ENCODE measurements at regions of chr11 and their contacts with region 1.

Region 1: DNA sequence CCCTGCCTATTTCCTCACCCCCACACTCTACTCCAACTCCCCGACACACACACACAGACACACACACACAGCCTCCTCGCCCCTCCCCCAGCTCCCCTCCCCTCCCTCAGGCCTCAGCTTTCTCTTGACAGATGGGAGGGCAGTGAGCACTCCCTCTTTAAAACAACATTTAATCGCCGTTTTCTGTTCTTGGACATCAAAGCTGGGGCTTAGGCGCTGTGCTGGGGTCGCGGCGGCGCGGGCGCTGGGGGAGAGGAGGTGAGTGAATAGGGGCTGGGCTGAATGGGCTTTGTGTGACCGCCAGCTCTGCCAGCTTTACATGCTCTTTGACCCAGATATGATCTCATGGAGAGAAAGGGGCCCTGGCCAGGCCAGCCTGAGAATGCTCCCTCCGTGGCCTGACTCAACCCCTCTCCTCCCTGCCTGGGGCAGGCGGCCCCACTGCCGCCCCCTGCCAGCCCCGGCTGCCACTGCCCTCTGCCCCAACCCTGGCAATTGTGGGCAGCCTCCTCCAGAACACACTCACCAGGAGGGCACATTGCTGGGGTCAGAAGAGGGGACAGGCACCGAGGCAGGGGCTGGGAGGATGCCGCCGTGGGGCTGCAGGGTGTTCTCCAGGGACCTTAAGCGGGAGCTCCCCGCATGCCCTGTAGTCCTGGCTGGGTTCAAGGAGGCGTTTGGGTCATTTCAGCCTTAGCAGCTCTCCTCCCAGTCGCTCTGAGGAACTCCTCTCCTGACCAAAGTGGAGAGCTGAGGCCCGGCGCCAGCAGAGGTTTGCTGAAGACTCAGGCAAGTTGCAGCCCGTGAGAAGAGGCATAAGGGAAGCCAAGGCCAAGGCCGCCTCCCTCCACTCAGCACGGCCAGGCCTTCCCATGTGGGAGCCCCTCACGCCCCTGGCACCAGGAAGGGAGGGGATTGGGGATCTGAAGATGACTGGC is 38.3 kb upstream of the NNMT start:
- DNase-seq: no peak
- H3K4me3 ChIP-seq: peak overlapping the region; percentile 24 to 38
- H3K27ac ChIP-seq: peak overlapping the region; percentile 86
- H3K4me1 ChIP-seq: peaks cover 71% of the 10 kb centered on the region
- H3K27me3 ChIP-seq: no peaks in the 10 kb centered on the region
- CTCF ChIP-seq: peak in 1 of 3 experiments; percentile 9
- POLR2A ChIP-seq: no peak

Region 2: DNA sequence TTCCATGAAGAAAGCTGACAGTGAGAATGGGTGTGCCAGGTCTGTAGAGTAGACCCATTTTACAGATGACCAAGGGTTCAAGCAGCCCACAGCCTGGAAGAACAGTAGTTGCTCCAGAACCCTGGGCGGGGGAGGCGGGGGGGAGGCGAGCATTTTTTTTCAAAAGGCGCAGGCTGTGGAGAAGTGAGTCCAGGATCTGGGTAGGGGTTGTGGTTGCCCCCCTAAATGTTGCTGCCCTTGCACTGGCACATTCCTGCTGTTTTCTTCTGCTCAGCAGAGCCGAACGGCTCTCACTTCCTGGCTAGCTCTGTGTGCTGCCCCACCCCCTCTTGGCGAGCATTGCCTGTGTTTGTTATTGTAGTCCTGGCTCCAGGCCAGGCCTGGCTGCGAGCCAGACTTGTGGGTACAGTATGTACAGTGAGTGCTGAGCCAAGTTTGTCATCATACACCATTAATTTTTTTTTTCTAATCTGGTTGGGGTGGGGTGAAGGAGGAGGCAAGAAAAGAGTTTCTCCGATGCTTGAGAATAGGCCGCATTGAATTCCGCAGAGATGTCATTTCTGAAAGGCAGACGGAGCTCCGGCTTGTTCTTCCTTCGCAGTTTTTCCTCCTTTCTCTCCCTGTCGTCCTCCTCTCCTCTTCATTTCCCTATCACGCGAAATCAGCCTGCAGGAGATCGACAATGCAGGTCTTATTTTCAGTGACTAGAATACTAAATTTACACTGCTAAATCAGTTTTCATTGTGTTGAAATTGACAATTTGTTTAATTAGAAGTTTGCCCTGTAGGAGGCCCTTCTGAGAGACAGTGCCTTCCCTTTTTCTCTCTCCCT is 97.9 kb before region 1 on chr11:
- intact Hi-C with region 1: loop called (anchors 10 kb)
- DNase-seq: peak in 1 of 2 donors; percentile 98
- H3K4me3 ChIP-seq: peak overlapping the region; percentile 26 to 31
- H3K27ac ChIP-seq: peak overlapping the region; percentile 95
- H3K4me1 ChIP-seq: peaks cover 99% of the 10 kb centered on the region
- H3K27me3 ChIP-seq: no peaks in the 10 kb centered on the region
- CTCF ChIP-seq: no peak
- POLR2A ChIP-seq: peak in 1 of 2 donors; percentile 4

Region 3: DNA sequence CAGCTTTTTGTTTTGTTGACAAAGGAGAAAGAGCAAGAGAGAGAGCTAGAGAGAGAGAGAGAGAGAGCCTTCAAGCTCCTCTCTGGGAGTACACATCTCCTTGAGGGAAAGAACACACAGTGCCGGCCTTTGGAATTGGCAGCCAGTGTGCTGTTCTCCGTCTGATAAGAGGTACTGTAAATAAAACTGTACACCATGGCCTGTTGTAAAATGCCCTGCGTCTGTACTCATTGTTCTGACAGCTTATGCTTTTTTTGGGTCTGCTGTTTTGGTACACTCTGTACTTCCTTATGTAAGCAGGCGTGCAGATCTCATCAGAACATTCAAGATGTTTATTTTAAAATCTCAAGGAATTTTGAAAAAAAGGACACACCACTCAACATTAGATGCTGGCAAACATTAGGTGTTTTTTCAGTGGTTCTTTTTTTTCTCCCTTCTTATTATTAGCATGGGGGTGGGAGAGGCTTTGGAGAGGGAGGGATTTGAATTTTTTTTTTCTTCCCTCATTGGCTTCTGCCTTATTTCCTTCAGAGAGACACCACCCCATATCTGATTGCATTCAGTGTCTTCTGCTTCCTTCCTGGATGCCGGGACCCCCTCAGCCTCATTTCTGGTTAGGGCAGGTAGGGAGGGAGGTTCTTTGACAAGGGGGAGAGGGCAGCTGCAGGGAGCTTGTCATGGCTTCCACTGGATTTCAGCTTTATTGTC is 78.5 kb before region 1 on chr11:
- intact Hi-C with region 1: loop called (anchors 1 kb)
- DNase-seq: peak in 1 of 2 donors; percentile 99
- H3K4me3 ChIP-seq: peak overlapping the region; percentile 33 to 39
- H3K27ac ChIP-seq: peak overlapping the region; percentile 95
- H3K4me1 ChIP-seq: peaks cover 95% of the 10 kb centered on the region
- H3K27me3 ChIP-seq: no peaks in the 10 kb centered on the region
- CTCF ChIP-seq: no peak
- POLR2A ChIP-seq: no peak

Region 4: DNA sequence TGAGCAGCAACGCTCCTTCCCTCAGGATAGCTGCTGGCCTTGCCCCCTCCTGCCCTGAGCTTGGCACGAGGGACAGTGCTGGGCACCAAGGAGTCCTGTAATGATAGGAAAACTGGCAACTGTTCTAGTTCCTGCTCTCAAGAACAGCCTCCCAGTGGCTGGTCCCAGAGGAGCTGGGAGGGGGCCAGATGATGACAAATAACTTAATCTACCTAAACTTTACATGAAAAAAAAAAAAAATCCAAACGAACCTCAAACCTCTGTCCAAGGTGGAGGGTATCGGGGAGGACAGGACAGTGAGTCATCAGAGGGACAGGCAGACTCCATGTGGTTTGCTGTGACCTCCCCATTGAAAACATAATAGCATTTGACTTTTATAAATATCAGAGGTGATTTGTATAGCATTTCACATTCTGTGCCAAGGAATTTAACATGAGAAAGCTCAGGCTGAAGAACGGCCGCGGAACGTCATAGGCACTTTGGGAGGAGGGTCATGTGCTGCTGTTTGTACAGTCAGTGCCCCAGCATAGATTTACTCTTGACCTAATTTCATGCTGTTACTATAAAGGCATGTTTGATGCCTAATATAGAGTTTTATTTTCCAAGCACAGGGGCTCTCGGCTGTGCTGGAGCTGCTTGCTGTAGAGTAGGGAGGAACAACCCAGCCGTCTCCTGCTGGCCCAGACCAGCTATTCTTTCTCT is 59.9 kb before region 1 on chr11:
- intact Hi-C with region 1: loop called (anchors 2 kb)
- DNase-seq: no peak
- H3K4me3 ChIP-seq: peak overlapping the region in 1 of 2 donors; percentile 5
- H3K27ac ChIP-seq: peak overlapping the region; percentile 84
- H3K4me1 ChIP-seq: peaks cover 80% of the 10 kb centered on the region
- H3K27me3 ChIP-seq: no peaks in the 10 kb centered on the region
- CTCF ChIP-seq: no peak
- POLR2A ChIP-seq: no peak

Region 5: GRCh38 chr11:114606003-114606801 is 348.3 kb after region 1 on chr11:
- intact Hi-C with region 1: no loop called
- DNase-seq: peak; percentile 12 to 40
- H3K4me3 ChIP-seq: no peak overlapping the region
- H3K27ac ChIP-seq: no peak overlapping the region
- H3K4me1 ChIP-seq: no peaks in the 10 kb centered on the region
- H3K27me3 ChIP-seq: no peaks in the 10 kb centered on the region
- CTCF ChIP-seq: no peak
- POLR2A ChIP-seq: no peak

Measured in vagina (tissue), 2 donors.